Naive thymus-derived CD4-positive, alpha-beta T cell (primary cell): ENCODE measurements at regions of chr2 and their contacts with region 1.

Region 1: GRCh38 chr2:177212106-177212890 is at the start of gene HNRNPA3:
- DNase-seq: peak; percentile 99 to 100 (median 100)
- ATAC-seq: peak; percentile 93
- H3K4me3 ChIP-seq: peak within 1 kb of the TSS; percentile 87
- H3K4me3 Mint-ChIP-seq: peak within 1 kb of the TSS; percentile 88 to 96 (median 94)
- H3K27ac ChIP-seq: peak within 1 kb of the TSS; percentile 99
- H3K27ac Mint-ChIP-seq: peak within 1 kb of the TSS; percentile 98 to 100 (median 99)
- H3K4me1 ChIP-seq: peaks cover 38 to 43% of the 10 kb centered on the region in 2 donors
- H3K4me1 Mint-ChIP-seq: peaks cover 27 to 60% (median 48%) of the 10 kb centered on the region in 7 donors
- H3K27me3 ChIP-seq: no peaks in the 10 kb centered on the region
- H3K27me3 Mint-ChIP-seq: peaks cover 0 to 6% (median 0%) of the 10 kb centered on the region in 5 donors
- total RNA-seq, gene HNRNPA3: 151 to 311 (median 184) TPM

Region 2: GRCh38 chr2:176001916-176002687 is 1210.2 kb before region 1 on chr2 and contains the start of gene LNPK:
- CTCF ChIA-PET with region 1: no interaction called
- POLR2A ChIA-PET with region 1: interaction called, 3 read pairs
- intact Hi-C with region 1: loop called in 1 of 2 experiments (anchors 2 kb)
- DNase-seq: peak; percentile 82 to 93 (median 91)
- ATAC-seq: peak; percentile 94
- H3K4me3 ChIP-seq: peak within 1 kb of the TSS; percentile 84
- H3K4me3 Mint-ChIP-seq: peak within 1 kb of the TSS; percentile 89 to 96 (median 92)
- H3K27ac ChIP-seq: peak within 1 kb of the TSS; percentile 75
- H3K27ac Mint-ChIP-seq: peak within 1 kb of the TSS; percentile 79 to 99 (median 92)
- H3K4me1 ChIP-seq: peaks cover 11 to 16% of the 10 kb centered on the region in 2 donors
- H3K4me1 Mint-ChIP-seq: peaks cover 18 to 35% (median 31%) of the 10 kb centered on the region in 7 donors
- H3K27me3 ChIP-seq: no peaks in the 10 kb centered on the region
- H3K27me3 Mint-ChIP-seq: peaks cover 0 to 9% (median 0%) of the 10 kb centered on the region in 5 donors
- total RNA-seq, gene LNPK: 19.4 to 36.8 (median 24.0) TPM

Region 3: DNA sequence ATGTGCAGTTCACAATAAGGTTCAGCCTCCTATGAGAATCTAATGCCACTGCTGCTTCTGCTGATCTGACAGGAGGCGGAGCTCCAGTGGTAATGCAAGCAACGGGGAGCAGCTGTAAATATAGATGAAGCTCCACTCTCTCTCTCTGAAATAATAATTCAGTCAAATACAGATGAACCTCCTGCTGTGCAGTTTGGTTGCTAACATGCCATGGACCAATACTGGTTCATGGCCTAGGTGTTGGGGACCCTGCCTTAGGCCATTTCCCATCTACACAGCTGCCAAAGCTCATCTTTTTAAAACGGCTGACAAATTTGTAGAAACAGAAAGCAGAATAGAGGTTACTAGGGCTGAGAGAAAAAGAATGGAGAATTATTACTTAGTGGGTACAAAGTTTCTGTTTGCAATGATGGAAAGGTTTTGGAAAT is 10.4 kb before region 1 on chr2:
- CTCF ChIA-PET with region 1: no interaction called
- POLR2A ChIA-PET with region 1: interaction called, 15 read pairs
- intact Hi-C with region 1: no loop called
- DNase-seq: no peak
- ATAC-seq: no peak
- H3K4me3 ChIP-seq: no peak overlapping the region
- H3K4me3 Mint-ChIP-seq: no peak overlapping the region
- H3K27ac ChIP-seq: no peak overlapping the region
- H3K27ac Mint-ChIP-seq: no peak overlapping the region
- H3K4me1 ChIP-seq: no peaks in the 10 kb centered on the region
- H3K4me1 Mint-ChIP-seq: peaks cover 0 to 10% (median 3%) of the 10 kb centered on the region in 7 donors
- H3K27me3 ChIP-seq: no peaks in the 10 kb centered on the region
- H3K27me3 Mint-ChIP-seq: no peaks in the 10 kb centered on the region

Region 4: GRCh38 chr2:177254433-177255226 is 42.3 kb after region 1 on chr2:
- CTCF ChIA-PET with region 1: interaction called, 4 read pairs
- POLR2A ChIA-PET with region 1: interaction called, 10 read pairs
- intact Hi-C with region 1: loop called in 1 of 2 experiments (anchors 1 kb)
- DNase-seq: no peak
- ATAC-seq: no peak
- H3K4me3 ChIP-seq: no peak overlapping the region
- H3K4me3 Mint-ChIP-seq: peak overlapping the region; percentile 22 to 92 (median 52)
- H3K27ac ChIP-seq: peak overlapping the region; percentile 4
- H3K27ac Mint-ChIP-seq: peak overlapping the region; percentile 15 to 98 (median 52)
- H3K4me1 ChIP-seq: peaks cover 39 to 84% of the 10 kb centered on the region in 2 donors
- H3K4me1 Mint-ChIP-seq: peaks cover 70 to 99% (median 97%) of the 10 kb centered on the region in 7 donors
- H3K27me3 ChIP-seq: no peaks in the 10 kb centered on the region
- H3K27me3 Mint-ChIP-seq: no peaks in the 10 kb centered on the region

Region 5: GRCh38 chr2:177392373-177393202 is 180.3 kb after region 1 on chr2 and contains the start of gene AGPS:
- CTCF ChIA-PET with region 1: no interaction called
- POLR2A ChIA-PET with region 1: interaction called, 3 read pairs
- intact Hi-C with region 1: loop called (anchors 1 to 2 kb)
- DNase-seq: peak; percentile 62 to 86 (median 71)
- ATAC-seq: peak; percentile 94
- H3K4me3 ChIP-seq: peak within 1 kb of the TSS; percentile 67
- H3K4me3 Mint-ChIP-seq: peak within 1 kb of the TSS; percentile 81 to 99 (median 96)
- H3K27ac ChIP-seq: peak within 1 kb of the TSS; percentile 53
- H3K27ac Mint-ChIP-seq: peak within 1 kb of the TSS; percentile 85 to 97 (median 92)
- H3K4me1 ChIP-seq: peaks cover 20 to 23% of the 10 kb centered on the region in 2 donors
- H3K4me1 Mint-ChIP-seq: peaks cover 48 to 74% (median 61%) of the 10 kb centered on the region in 7 donors
- H3K27me3 ChIP-seq: no peaks in the 10 kb centered on the region
- H3K27me3 Mint-ChIP-seq: no peaks in the 10 kb centered on the region
- total RNA-seq, gene AGPS: 21.8 to 60.4 (median 26.1) TPM

Region 6: GRCh38 chr2:177618255-177619253 is 406.3 kb after region 1 on chr2:
- CTCF ChIA-PET with region 1: no interaction called
- POLR2A ChIA-PET with region 1: no interaction called
- intact Hi-C with region 1: loop called (anchors 1 kb)
- DNase-seq: peak; percentile 86 to 93 (median 91)
- ATAC-seq: peak; percentile 95
- H3K4me3 ChIP-seq: peak overlapping the region; percentile 86
- H3K4me3 Mint-ChIP-seq: peak overlapping the region; percentile 80 to 99 (median 96)
- H3K27ac ChIP-seq: peak overlapping the region; percentile 96
- H3K27ac Mint-ChIP-seq: peak overlapping the region; percentile 98 to 100 (median 99)
- H3K4me1 ChIP-seq: no peaks in the 10 kb centered on the region
- H3K4me1 Mint-ChIP-seq: peaks cover 0 to 15% (median 9%) of the 10 kb centered on the region in 7 donors
- H3K27me3 ChIP-seq: no peaks in the 10 kb centered on the region
- H3K27me3 Mint-ChIP-seq: peaks cover 0 to 35% (median 9%) of the 10 kb centered on the region in 5 donors

Region 7: DNA sequence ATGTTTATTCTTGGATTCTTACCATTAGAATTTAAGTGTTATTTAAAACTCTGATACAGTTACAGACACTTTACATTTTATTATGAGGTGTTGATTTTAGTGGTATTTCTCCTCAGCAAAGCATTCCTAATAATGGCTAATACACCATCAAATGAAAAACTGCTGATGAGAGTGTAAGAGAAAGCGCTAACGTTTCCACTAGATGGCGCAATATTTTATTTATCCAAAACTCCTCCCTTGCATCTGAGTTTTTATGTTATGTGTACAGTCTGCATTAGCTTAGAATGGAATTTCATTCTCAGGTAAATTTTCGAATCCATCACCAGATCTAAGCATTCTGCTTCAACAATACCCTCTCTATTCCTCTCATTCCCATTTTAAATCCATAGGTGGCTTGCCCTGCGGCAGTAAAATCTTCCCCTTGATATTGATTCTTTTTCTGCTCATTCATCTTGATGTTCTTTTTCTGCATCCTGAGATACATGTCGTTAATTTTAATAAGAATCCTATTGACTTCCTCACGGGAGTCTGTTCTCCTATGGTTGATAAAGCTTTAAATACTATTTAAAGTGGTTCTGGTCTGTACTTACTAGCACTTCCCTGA is 1184.8 kb after region 1 on chr2:
- CTCF ChIA-PET with region 1: no interaction called
- POLR2A ChIA-PET with region 1: no interaction called
- intact Hi-C with region 1: no loop called
- DNase-seq: peak in 6 of 9 donors; percentile 5 to 44 (median 30)
- ATAC-seq: peak; percentile 75
- H3K4me3 ChIP-seq: no peak overlapping the region
- H3K4me3 Mint-ChIP-seq: no peak overlapping the region
- H3K27ac ChIP-seq: no peak overlapping the region
- H3K27ac Mint-ChIP-seq: no peak overlapping the region
- H3K4me1 ChIP-seq: no peaks in the 10 kb centered on the region
- H3K4me1 Mint-ChIP-seq: peaks cover 0 to 6% (median 0%) of the 10 kb centered on the region in 7 donors
- H3K27me3 ChIP-seq: no peaks in the 10 kb centered on the region
- H3K27me3 Mint-ChIP-seq: peaks cover 0 to 32% (median 5%) of the 10 kb centered on the region in 5 donors

Region 8: DNA sequence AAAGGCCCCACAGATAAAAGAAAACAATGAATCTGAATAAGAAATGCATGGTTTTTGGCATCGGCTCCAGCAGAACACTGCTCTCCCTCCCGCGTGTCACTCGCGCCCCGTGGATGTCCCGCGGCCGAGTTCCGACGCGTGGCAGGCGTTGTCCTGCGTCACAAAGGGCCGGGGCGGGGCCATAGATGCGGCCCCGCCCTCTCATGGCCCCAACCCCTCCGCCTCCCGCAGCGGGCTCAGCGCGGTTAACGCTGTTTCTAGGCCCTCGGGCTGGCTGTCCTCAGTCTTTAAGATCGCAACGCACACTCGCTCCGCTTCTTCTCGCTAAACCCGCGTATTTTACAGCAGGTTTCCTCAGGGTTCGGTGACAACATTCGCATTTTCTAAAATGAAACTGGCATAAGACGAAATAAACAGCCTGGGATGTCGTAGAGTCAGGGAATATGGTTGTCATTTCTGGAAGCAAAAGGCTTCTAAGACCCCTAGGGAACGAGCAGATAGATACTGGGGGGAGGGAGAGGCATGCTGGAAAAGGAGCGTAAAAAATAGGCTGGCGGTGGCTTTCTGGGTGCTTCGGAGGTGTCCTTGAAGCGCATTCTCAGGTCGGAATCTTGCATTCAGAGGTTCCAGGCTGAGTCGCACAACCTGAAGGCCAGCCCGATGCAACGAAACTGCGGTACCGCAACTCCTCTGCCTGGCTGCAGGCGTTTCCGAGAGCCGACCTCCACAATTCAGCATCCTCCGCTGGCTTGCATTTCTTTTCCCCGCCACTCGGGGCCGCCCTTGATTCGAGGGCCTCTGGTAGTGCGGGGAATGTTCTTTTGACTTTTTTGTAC is 1266.4 kb after region 1 on chr2 and contains the start of gene FKBP7:
- CTCF ChIA-PET with region 1: no interaction called
- POLR2A ChIA-PET with region 1: no interaction called
- intact Hi-C with region 1: loop called in 1 of 2 experiments (anchors 2 kb)
- DNase-seq: peak; percentile 71 to 87 (median 80)
- ATAC-seq: peak; percentile 90
- H3K4me3 ChIP-seq: peak within 1 kb of the TSS; percentile 91
- H3K4me3 Mint-ChIP-seq: peak within 1 kb of the TSS; percentile 94 to 100 (median 99)
- H3K27ac ChIP-seq: peak within 1 kb of the TSS; percentile 80
- H3K27ac Mint-ChIP-seq: peak within 1 kb of the TSS; percentile 91 to 99 (median 98)
- H3K4me1 ChIP-seq: peaks cover 22 to 28% of the 10 kb centered on the region in 2 donors
- H3K4me1 Mint-ChIP-seq: peaks cover 27 to 45% (median 41%) of the 10 kb centered on the region in 7 donors
- H3K27me3 ChIP-seq: no peaks in the 10 kb centered on the region
- H3K27me3 Mint-ChIP-seq: no peaks in the 10 kb centered on the region
- total RNA-seq, gene FKBP7: 0.64 to 2.7 (median 1.9) TPM